ENCODE measurements at regions of chr12 and their contacts with region 1.

Region 1: GRCh38 chr12:104555648-104556047 is 98.9 kb downstream of the CHST11 start:
- DNase-seq: no peak
- H3K4me3 ChIP-seq: no peak overlapping the region
- H3K27ac ChIP-seq: no peak overlapping the region
- H3K4me1 ChIP-seq: no peaks in the 10 kb centered on the region
- H3K27me3 ChIP-seq: no peaks in the 10 kb centered on the region
- CTCF ChIP-seq: no peak

Region 2: GRCh38 chr12:104022786-104023185 is 532.9 kb before region 1 on chr12:
- CTCF ChIA-PET with region 1: no interaction called
- POLR2A ChIA-PET with region 1: no interaction called
- intact Hi-C with region 1: no loop called
- DNase-seq: no peak
- H3K4me3 ChIP-seq: no peak overlapping the region
- H3K27ac ChIP-seq: no peak overlapping the region
- H3K4me1 ChIP-seq: no peaks in the 10 kb centered on the region
- H3K27me3 ChIP-seq: peaks cover 21% of the 10 kb centered on the region; the same call in 1 of the 2 replicates
- CTCF ChIP-seq: no peak

Region 3: GRCh38 chr12:104535369-104535768 is 20.3 kb before region 1 on chr12:
- CTCF ChIA-PET with region 1: no interaction called
- POLR2A ChIA-PET with region 1: no interaction called
- intact Hi-C with region 1: no loop called
- DNase-seq: no peak
- H3K4me3 ChIP-seq: no peak overlapping the region
- H3K27ac ChIP-seq: no peak overlapping the region
- H3K4me1 ChIP-seq: no peaks in the 10 kb centered on the region
- H3K27me3 ChIP-seq: no peaks in the 10 kb centered on the region
- CTCF ChIP-seq: no peak

Region 4: DNA sequence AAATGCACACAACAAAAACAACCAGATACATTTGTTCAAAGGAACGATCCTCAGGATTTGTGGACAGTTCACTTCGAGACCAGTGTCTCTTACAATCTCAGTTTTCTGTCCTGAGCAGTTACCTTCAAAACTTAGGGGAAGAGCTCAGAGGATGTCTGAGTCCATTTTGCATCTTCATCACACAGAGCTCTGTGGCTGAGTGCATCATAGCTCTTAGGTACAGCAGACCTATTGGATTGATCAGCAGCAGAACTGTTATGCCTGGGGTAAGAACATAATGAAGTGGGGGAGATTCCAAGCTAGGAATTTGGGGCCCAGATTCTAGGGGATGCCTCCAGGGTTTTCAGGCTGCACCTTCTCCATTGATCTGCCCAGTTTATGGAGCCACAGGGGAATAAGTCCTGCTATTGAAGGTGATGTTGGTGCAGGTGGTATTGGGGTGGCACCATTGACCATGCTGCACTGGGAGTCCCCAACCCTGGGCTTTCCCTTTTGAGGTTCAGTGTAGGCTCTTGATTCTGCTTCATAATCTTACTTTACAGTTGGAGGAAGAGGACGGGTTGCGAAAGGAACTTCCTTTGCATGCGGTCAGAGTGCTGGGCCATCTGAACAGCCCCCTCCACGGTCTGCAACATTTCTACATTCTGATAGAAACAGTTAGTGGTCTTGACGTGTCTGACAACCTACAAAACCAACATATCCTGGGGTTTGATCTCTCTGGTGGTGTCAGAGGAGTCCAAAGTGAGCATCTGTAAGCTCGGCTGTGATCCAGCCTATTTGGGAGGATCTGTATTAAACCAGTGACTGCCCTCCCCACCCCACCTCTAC is 13.9 kb after region 1 on chr12:
- CTCF ChIA-PET with region 1: interaction called, 12 read pairs
- POLR2A ChIA-PET with region 1: no interaction called
- intact Hi-C with region 1: no loop called
- DNase-seq: no peak
- H3K4me3 ChIP-seq: no peak overlapping the region
- H3K27ac ChIP-seq: no peak overlapping the region
- H3K4me1 ChIP-seq: no peaks in the 10 kb centered on the region
- H3K27me3 ChIP-seq: no peaks in the 10 kb centered on the region
- CTCF ChIP-seq: no peak

Measured in PC-9 (cell line).